Activated CD8-positive, alpha-beta T cell treated with anti-CD3 and anti-CD28 coated beads for 36 hours (primary cell): ENCODE measurements at regions of chr22 and their contacts with region 1.

Region 1: GRCh38 chr22:41636467-41636866 is 15.4 kb downstream of the XRCC6 start:
- DNase-seq: no peak
- ATAC-seq: no peak
- H3K4me3 Mint-ChIP-seq: no peak overlapping the region
- H3K27ac Mint-ChIP-seq: peak overlapping the region; percentile 49
- H3K4me1 Mint-ChIP-seq: peaks cover 5% of the 10 kb centered on the region
- H3K27me3 Mint-ChIP-seq: no peaks in the 10 kb centered on the region
- CTCF ChIP-seq: no peak

Region 2: GRCh38 chr22:41650821-41651220 is 14.4 kb after region 1 on chr22:
- CTCF ChIA-PET with region 1: no interaction called
- POLR2A ChIA-PET with region 1: interaction called, 10 read pairs
- intact Hi-C with region 1: no loop called
- DNase-seq: no peak
- ATAC-seq: no peak
- H3K4me3 Mint-ChIP-seq: no peak overlapping the region
- H3K27ac Mint-ChIP-seq: no peak overlapping the region
- H3K4me1 Mint-ChIP-seq: peaks cover 13% of the 10 kb centered on the region
- H3K27me3 Mint-ChIP-seq: no peaks in the 10 kb centered on the region
- CTCF ChIP-seq: no peak